ENCODE measurements at regions of chr4 and their contacts with region 1.

Region 1: DNA sequence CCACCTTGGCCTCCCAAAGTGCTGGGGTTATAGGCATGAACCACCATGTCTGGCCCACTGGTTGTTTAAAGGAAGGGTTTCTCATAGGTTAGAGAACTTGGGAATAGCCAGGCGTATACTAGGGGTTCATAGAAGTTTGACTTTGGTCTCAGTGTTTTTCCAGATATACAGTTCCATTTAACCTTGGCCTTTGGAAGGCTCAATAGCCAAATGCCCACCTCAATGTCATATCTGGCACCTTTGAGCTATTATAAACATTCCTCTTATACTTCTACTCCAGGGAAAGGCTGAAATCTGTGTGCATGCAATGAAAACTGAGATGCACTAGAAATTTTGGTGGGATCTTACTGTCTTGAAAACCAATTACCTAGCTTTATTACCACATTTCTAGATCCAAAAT is 47.5 kb upstream of the PROM1 start:
- DNase-seq: no peak
- ATAC-seq: no peak
- H3K4me3 Mint-ChIP-seq: no peak overlapping the region
- H3K27ac Mint-ChIP-seq: no peak overlapping the region
- H3K4me1 Mint-ChIP-seq: no peaks in the 10 kb centered on the region
- H3K27me3 Mint-ChIP-seq: peaks cover 10% of the 10 kb centered on the region
- CTCF ChIP-seq: no peak

Region 2: GRCh38 chr4:15655229-15656037 is 475.9 kb before region 1 on chr4 and contains the start of gene FBXL5:
- CTCF ChIA-PET with region 1: no interaction called
- POLR2A ChIA-PET with region 1: no interaction called
- intact Hi-C with region 1: no loop called
- DNase-seq: peak; percentile 89
- ATAC-seq: peak; percentile 82
- H3K4me3 Mint-ChIP-seq: peak within 1 kb of the TSS; percentile 95
- H3K27ac Mint-ChIP-seq: peak within 1 kb of the TSS; percentile 97
- H3K4me1 Mint-ChIP-seq: peaks cover 42% of the 10 kb centered on the region
- H3K27me3 Mint-ChIP-seq: no peaks in the 10 kb centered on the region
- CTCF ChIP-seq: no peak
- total RNA-seq, gene FBXL5: 29.9 and 32.1 TPM in 2 replicates

Region 3: DNA sequence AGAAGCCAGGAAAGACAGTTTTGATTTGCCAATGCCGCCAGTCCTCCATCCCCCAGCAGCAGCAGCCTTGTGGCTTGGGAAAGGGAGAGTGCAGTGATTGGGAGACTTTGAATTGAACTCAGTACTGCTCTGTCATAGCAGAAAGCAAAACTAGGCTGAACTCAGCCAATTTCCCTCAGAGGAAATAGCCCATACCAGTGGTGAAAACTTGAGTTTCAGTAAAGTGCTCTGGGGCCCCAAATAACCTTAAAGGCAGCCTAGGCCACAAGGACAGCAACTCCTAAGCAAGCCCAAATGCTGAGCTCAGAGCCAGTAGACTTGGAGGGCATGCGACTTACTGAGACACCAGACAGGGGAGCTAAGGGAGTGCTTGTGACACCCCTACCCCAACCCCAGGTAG is 45.5 kb before region 1 on chr4:
- CTCF ChIA-PET with region 1: no interaction called
- POLR2A ChIA-PET with region 1: no interaction called
- intact Hi-C with region 1: loop called (anchors 1 kb)
- DNase-seq: no peak
- ATAC-seq: no peak
- H3K4me3 Mint-ChIP-seq: no peak overlapping the region
- H3K27ac Mint-ChIP-seq: no peak overlapping the region
- H3K4me1 Mint-ChIP-seq: peaks cover 25% of the 10 kb centered on the region
- H3K27me3 Mint-ChIP-seq: peaks cover 58% of the 10 kb centered on the region
- CTCF ChIP-seq: no peak

Region 4: GRCh38 chr4:16102356-16102755 is 28.9 kb before region 1 on chr4:
- CTCF ChIA-PET with region 1: no interaction called
- POLR2A ChIA-PET with region 1: no interaction called
- intact Hi-C with region 1: no loop called
- DNase-seq: no peak
- ATAC-seq: no peak
- H3K4me3 Mint-ChIP-seq: no peak overlapping the region
- H3K27ac Mint-ChIP-seq: no peak overlapping the region
- H3K4me1 Mint-ChIP-seq: no peaks in the 10 kb centered on the region
- H3K27me3 Mint-ChIP-seq: peaks cover 3% of the 10 kb centered on the region
- CTCF ChIP-seq: no peak